Gastrocnemius medialis (tissue), 4 donors: ENCODE measurements at regions of chr12 and their contacts with region 1.

Region 1: GRCh38 chr12:121888478-121889266 is at the start of gene PSMD9:
- DNase-seq: peak; percentile 96
- ATAC-seq: peak; percentile 94 to 97
- H3K4me3 ChIP-seq: peak within 1 kb of the TSS; percentile 84 to 99 (median 92)
- H3K27ac ChIP-seq: peak within 1 kb of the TSS; percentile 94 to 99 (median 96)
- H3K4me1 ChIP-seq: peaks cover 19 to 24% of the 10 kb centered on the region in 2 donors
- H3K27me3 ChIP-seq: no peaks in the 10 kb centered on the region
- CTCF ChIP-seq: peak; percentile 61 to 77 (median 70)
- POLR2A ChIP-seq: peak; percentile 67 to 75
- total RNA-seq, gene PSMD9: 16.5 to 84.9 (median 47.0) TPM

Region 2: GRCh38 chr12:121688966-121689365 is 199.7 kb before region 1 on chr12:
- in situ Hi-C with region 1: loop called in 2 of 4 experiments (anchors 5 to 10 kb)
- intact Hi-C with region 1: loop called (anchors 5 kb)
- DNase-seq: no peak
- ATAC-seq: no peak
- H3K4me3 ChIP-seq: no peak overlapping the region
- H3K27ac ChIP-seq: no peak overlapping the region
- H3K4me1 ChIP-seq: peaks cover 4 to 5% of the 10 kb centered on the region in 2 donors
- H3K27me3 ChIP-seq: no peaks in the 10 kb centered on the region
- CTCF ChIP-seq: no peak
- POLR2A ChIP-seq: no peak

Region 3: GRCh38 chr12:121697098-121697698 is 191.5 kb before region 1 on chr12:
- in situ Hi-C with region 1: loop called in 2 of 4 experiments (anchors 5 to 10 kb)
- intact Hi-C with region 1: no loop called
- DNase-seq: no peak
- ATAC-seq: peak; percentile 14 to 51
- H3K4me3 ChIP-seq: peak overlapping the region in 1 of 4 donors; percentile 4
- H3K27ac ChIP-seq: peak overlapping the region in 1 of 4 donors; percentile 1
- H3K4me1 ChIP-seq: peaks cover 8 to 14% of the 10 kb centered on the region in 2 donors
- H3K27me3 ChIP-seq: no peaks in the 10 kb centered on the region
- CTCF ChIP-seq: peak; percentile 65 to 76 (median 70)
- POLR2A ChIP-seq: no peak

Region 4: GRCh38 chr12:121712461-121713256 is 176.0 kb before region 1 on chr12 and contains the start of gene TMEM120B:
- in situ Hi-C with region 1: no loop called
- intact Hi-C with region 1: loop called (anchors 2 kb)
- DNase-seq: peak; percentile 73 to 85
- ATAC-seq: peak; percentile 67 to 78
- H3K4me3 ChIP-seq: peak within 1 kb of the TSS; percentile 87 to 91 (median 90)
- H3K27ac ChIP-seq: peak within 1 kb of the TSS; percentile 93 to 100 (median 99)
- H3K4me1 ChIP-seq: peaks cover 38 to 48% of the 10 kb centered on the region in 2 donors
- H3K27me3 ChIP-seq: no peaks in the 10 kb centered on the region
- CTCF ChIP-seq: peak in 1 of 5 experiments; percentile 26
- POLR2A ChIP-seq: peak; percentile 98 to 99
- total RNA-seq, gene TMEM120B: 5.9 to 11.2 (median 6.4) TPM

Region 5: DNA sequence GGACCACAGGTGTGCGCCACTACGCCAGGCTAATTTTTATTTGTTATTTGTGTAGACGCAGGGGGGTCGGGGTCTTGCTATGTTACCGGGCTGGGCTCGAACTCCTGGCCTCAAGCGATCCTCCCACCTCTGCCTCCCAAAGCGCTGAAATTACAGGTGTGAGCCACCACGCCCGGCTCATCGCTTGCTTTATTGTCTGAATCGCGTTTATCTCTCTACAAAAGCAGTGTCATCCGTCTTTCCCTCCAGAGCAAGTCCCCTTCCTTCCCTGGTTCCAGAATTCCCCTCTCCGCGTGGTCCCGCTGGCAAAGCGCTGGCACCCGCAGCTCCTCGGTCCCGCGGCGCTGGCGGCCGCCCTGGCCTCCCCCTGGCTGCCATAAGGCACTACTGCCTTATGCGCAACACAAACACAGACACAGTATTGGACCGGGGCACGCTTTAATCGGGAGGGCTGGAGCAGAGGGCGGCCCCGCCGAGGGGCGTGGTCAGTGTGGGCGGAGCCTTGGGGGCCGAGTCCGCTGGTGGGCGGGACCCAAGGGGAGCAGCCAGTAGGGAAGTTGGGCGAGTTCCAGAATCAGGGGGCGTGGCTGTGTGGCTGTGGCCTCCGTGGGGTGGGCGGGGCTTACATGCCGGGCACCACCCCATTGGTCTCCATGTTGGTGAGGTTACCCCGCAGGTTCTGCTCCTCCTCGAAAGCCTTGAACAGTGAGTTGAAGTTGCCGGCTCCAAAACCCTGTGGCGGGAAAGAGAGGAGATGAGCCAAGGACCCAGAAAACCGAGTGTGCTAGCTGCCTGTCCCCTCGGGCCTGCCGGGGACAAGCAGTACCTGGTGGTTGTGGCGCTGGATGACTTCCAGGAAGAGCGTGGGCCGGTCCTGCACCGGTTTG is 49.3 kb before region 1 on chr12:
- in situ Hi-C with region 1: no loop called
- intact Hi-C with region 1: loop called (anchors 1 kb)
- DNase-seq: peak; percentile 98
- ATAC-seq: peak; percentile 96 to 98
- H3K4me3 ChIP-seq: peak overlapping the region; percentile 66 to 79 (median 71)
- H3K27ac ChIP-seq: peak overlapping the region; percentile 64 to 83 (median 78)
- H3K4me1 ChIP-seq: peaks cover 8 to 12% of the 10 kb centered on the region in 2 donors
- H3K27me3 ChIP-seq: no peaks in the 10 kb centered on the region
- CTCF ChIP-seq: peak; percentile 36 to 64 (median 57)
- POLR2A ChIP-seq: peak; percentile 42 to 71

Region 6: GRCh38 chr12:121858662-121859572 is 29.8 kb before region 1 on chr12 and contains the start of gene HPD:
- in situ Hi-C with region 1: no loop called
- intact Hi-C with region 1: loop called (anchors 2 kb)
- DNase-seq: peak; percentile 80 to 84
- ATAC-seq: peak; percentile 93 to 94
- H3K4me3 ChIP-seq: no peak within 1 kb of the TSS
- H3K27ac ChIP-seq: peak within 1 kb of the TSS; percentile 83 to 94 (median 90)
- H3K4me1 ChIP-seq: peaks cover 31 to 33% of the 10 kb centered on the region in 2 donors
- H3K27me3 ChIP-seq: no peaks in the 10 kb centered on the region
- CTCF ChIP-seq: no peak
- POLR2A ChIP-seq: no peak
- total RNA-seq, gene HPD: 2.0 to 5.0 (median 2.0) TPM in 3 of 4 donors, not detected in the other

Region 7: DNA sequence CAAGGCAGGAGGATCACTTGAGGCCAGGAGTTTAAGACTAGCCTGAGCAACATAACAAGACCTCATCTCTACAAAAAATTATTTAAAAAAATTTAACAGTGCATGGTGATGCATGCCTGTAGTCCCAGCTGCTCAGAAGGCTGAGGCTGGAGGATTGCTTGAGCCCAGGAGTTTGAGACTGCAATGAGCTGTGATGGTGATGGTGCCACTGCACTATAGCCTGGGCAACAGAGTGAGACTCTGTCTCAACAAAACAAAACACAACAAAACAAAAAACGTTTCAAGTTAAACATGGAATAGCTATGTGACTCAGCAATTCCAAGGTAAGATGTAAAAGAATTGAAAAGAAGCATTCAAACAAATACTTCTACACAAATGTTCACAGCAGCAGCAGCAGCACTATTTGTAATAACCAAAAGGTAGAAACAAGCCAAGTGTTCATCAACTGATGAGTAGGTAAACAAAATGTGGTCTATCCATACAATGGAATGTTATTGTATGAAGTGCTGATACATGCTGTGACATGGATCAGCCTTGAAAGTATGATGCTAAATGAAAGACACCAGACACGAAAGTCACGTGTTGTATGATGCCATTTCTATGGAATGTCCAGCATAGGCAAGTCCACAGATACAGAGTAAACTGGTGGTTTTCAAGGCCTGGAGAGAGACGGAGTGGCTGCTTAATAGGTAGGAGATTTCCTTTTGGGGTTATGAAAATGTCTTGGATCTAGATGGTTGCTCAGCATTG is 61.2 kb after region 1 on chr12:
- in situ Hi-C with region 1: no loop called
- intact Hi-C with region 1: no loop called
- DNase-seq: no peak
- ATAC-seq: no peak
- H3K4me3 ChIP-seq: no peak overlapping the region
- H3K27ac ChIP-seq: no peak overlapping the region
- H3K4me1 ChIP-seq: no peaks in the 10 kb centered on the region
- H3K27me3 ChIP-seq: no peaks in the 10 kb centered on the region
- CTCF ChIP-seq: no peak
- POLR2A ChIP-seq: no peak

Region 8: DNA sequence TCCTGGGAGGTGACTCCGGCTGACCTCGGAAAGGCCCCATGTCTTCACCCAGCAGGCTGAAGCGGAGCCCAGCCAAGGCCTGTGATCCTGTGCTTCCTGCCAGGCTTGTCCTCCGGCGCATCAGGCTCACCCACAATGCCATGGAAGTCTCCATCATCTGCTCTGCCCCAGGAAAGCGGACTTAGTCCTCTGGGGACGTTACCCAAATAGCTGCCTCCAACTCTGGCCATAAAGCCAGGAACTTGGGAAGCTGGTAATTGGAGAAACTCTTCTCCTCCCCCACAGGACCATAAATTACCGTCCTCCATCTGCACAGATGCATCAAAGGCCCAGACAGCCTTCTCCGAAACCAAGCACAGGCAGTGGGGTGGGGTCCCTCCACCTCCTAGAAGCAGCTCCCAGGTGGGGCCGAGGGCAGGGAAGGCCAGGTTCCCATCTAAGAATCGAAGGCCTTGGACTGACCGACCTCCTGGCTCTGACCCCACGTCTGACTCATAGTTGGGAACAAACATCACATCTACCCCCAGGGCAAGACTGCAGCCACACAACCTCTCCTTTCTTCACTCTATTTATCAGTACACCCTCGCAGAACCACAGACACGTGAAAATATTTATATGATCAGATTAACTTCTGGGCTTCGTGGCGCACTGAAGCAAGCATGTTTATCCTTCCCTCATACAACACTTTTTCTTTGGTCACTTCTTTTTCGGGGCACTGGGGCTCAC is 1205.8 kb after region 1 on chr12:
- in situ Hi-C with region 1: no loop called
- intact Hi-C with region 1: no loop called
- DNase-seq: peak; percentile 59 to 73
- ATAC-seq: peak; percentile 52 to 57
- H3K4me3 ChIP-seq: no peak overlapping the region
- H3K27ac ChIP-seq: peak overlapping the region; percentile 76 to 90 (median 88)
- H3K4me1 ChIP-seq: peaks cover 63 to 66% of the 10 kb centered on the region in 2 donors
- H3K27me3 ChIP-seq: no peaks in the 10 kb centered on the region
- CTCF ChIP-seq: no peak
- POLR2A ChIP-seq: no peak